BJ (cell line): ENCODE measurements at regions of chr1 and their contacts with region 1.

Region 1: DNA sequence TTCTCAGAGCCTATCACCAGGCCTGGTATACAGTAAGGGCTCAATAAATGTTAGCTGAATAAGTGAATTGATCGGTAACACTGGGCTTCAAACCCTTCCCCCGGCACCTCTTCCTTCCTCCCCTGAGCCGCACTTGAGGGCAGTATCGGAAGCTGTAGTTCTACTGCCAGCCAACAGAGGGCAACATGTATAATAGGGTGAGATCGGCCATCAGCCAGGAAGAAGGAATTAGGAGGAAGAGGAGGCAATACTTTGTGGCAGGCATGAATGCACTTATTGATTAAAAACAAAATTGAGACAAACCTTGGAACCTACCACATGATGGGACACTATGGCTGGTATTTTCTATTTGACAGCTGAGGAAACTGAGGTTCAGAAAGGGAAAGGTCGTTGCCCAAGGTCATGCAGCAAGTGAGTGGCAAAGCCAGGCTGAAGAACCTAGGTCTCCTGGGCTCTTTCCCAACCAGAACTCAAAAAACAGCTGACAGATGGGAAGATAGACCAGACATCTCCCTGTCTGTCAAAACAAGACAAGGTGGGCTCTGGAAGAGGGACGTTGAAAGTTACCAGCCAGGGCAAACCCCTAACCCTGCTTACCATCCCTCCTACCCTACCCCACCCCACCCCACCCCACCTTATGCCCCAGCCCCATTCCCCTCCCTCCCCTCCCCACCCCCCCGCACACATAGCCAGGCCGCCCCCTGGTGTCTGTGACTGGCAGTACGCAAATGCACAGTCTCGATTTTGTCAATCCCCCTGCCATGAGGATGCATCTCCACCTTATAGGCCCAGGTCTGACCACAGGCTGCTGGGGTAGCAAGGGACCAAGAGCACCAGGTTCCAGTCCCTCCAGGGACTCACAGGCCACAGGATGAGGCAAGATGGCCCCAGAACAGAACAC is 107.3 kb upstream of the RUNX3 start:
- DNase-seq: no peak
- H3K4me3 ChIP-seq: no peak overlapping the region
- H3K27me3 ChIP-seq: peaks cover 7% of the 10 kb centered on the region
- CTCF ChIP-seq: peak; percentile 69

Region 2: GRCh38 chr1:24939040-24939674 is 98.3 kb before region 1 on chr1:
- CTCF ChIA-PET with region 1: interaction called, 146 read pairs
- POLR2A ChIA-PET with region 1: no interaction called
- DNase-seq: no peak
- H3K4me3 ChIP-seq: no peak overlapping the region
- H3K27me3 ChIP-seq: peaks cover 9% of the 10 kb centered on the region
- CTCF ChIP-seq: no peak

Region 3: DNA sequence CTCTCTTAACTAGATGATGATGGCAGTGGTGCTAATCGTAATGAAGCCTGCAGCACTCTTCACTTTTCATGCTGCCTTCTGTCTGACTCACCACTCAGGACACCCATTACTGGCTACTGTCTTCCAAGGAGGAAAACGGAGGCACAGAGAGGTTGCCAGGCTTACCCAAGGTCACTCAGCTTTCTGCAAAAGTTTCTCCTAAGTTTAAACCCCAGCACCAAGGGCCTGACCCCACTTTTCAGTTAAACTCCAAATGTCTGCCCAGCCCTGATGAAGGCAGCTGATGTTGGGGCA is 29.3 kb before region 1 on chr1:
- CTCF ChIA-PET with region 1: interaction called, 10 read pairs
- POLR2A ChIA-PET with region 1: no interaction called
- DNase-seq: no peak
- H3K4me3 ChIP-seq: no peak overlapping the region
- H3K27me3 ChIP-seq: peaks cover 33% of the 10 kb centered on the region
- CTCF ChIP-seq: no peak

Region 4: DNA sequence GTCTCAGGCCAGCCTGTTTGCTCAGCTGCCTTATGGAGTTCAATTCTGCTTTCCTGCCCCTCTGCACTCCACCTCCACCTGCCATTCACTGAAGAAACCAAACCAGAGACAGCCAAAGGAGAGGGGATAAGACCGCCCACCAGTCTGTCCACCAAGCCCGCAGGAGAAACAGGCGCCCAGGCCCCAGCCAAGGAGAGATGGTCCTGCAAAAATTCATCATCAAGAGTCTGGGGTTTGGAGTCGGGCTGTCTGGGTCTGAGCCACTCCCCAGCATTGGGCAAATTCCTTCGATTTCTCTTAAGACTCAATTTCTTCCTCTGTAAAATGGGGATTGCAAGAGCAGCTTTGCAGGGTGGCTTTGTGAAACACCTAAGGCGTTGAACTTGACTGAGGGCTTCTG is 14.1 kb after region 1 on chr1:
- CTCF ChIA-PET with region 1: interaction called, 38 read pairs
- POLR2A ChIA-PET with region 1: interaction called, 5 read pairs
- DNase-seq: no peak
- H3K4me3 ChIP-seq: no peak overlapping the region
- H3K27me3 ChIP-seq: peaks cover 16% of the 10 kb centered on the region
- CTCF ChIP-seq: no peak

Region 5: DNA sequence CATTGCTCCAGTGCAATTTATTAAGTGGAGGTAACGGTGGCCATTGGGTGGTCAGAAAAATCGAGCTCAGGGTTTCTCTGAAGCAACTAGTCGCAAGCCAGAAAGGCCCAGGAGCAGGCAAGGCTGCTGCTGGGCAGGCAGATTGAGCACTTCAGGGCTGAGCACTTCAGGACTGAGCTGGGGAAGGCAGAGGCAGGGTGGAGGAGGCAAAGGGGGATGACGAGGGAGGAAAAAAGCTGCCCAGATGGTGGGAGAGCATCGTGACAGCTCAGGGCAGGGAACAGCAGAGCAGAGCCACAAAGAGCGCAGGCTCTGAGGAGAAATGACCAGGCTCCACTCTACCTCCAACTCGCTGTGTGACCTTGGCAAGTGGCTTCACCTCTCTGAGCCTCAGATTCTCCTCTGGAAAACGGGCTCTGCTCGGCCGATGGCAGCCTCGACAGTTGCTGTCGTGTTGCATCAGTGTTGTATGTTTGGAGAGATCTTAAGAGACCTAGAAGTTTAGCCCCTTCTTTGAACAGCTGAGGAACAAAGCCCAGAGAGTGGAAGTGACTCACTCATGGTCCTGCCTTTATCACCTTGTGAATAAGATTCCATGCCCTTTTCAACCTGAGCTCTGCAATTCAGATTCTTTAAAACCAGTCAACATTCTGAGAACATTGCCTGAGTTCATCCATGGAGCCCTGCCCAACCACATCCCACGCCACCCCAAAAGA is 53.4 kb after region 1 on chr1:
- CTCF ChIA-PET with region 1: no interaction called
- POLR2A ChIA-PET with region 1: no interaction called
- DNase-seq: no peak
- H3K4me3 ChIP-seq: no peak overlapping the region
- H3K27me3 ChIP-seq: peaks cover 6% of the 10 kb centered on the region
- CTCF ChIP-seq: no peak